Adrenal gland (tissue), 19 donors: ENCODE measurements at regions of chr2 and their contacts with region 1.

Region 1: DNA sequence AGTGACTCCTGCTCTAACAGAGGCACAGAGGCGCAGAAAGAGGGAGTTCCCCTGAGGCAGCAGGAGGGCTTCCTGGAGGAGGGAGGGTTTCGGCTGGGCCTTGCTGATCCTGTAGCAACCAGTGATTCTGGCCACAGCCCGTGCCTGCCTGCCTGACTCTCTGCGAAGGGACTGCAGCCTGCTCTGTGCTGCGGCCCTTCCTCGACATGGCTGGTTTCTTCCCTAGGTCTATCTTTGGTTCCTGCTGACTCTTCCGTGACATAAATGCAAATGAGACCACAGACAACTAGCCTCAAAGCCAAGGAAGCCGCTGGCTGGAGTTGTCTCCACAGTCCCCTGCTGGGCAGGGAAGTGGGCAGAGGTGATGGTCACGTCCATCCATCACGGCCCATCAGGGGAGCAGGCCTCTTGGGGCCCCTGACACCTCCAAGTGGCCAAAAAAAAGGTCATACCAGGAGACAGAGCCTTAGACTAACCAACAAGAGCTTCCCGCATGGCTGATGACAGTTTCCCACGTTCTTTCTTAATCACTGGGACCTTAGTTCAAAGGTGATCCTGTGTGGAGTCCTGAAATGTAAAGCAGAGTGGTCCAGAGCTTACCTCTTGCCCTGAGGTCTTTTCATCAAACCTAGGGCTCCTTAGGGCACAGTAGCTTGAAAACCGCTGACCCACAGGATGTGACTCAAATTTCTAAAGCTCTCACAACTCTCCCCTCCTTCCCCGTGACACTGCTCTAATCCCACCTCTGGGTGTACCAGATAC is 55.3 kb downstream of the HS1BP3 start:
- DNase-seq: peak in 6 of 7 donors; percentile 33 to 73 (median 52)
- H3K4me3 ChIP-seq: no peak overlapping the region
- H3K27ac ChIP-seq: peak overlapping the region; percentile 32 to 87 (median 83)
- H3K4me1 ChIP-seq: peaks cover 40 to 75% of the 10 kb centered on the region in 2 donors
- H3K27me3 ChIP-seq: no peaks in the 10 kb centered on the region
- CTCF ChIP-seq: no peak
- POLR2A ChIP-seq: peak in 1 of 2 donors; percentile 7

Region 2: GRCh38 chr2:20617892-20618467 is 22.4 kb after region 1 on chr2:
- intact Hi-C with region 1: loop called in 1 of 2 experiments (anchors 2 kb)
- DNase-seq: peak; percentile 98 to 100 (median 99)
- H3K4me3 ChIP-seq: no peak overlapping the region
- H3K27ac ChIP-seq: peak overlapping the region; percentile 90 to 100 (median 99)
- H3K4me1 ChIP-seq: peaks cover 29 to 68% of the 10 kb centered on the region in 2 donors
- H3K27me3 ChIP-seq: no peaks in the 10 kb centered on the region
- CTCF ChIP-seq: peak; percentile 47 to 93 (median 92)
- POLR2A ChIP-seq: peak in 1 of 2 donors; percentile 85